ENCODE measurements at regions of chr11 and their contacts with region 1.

Region 1: DNA sequence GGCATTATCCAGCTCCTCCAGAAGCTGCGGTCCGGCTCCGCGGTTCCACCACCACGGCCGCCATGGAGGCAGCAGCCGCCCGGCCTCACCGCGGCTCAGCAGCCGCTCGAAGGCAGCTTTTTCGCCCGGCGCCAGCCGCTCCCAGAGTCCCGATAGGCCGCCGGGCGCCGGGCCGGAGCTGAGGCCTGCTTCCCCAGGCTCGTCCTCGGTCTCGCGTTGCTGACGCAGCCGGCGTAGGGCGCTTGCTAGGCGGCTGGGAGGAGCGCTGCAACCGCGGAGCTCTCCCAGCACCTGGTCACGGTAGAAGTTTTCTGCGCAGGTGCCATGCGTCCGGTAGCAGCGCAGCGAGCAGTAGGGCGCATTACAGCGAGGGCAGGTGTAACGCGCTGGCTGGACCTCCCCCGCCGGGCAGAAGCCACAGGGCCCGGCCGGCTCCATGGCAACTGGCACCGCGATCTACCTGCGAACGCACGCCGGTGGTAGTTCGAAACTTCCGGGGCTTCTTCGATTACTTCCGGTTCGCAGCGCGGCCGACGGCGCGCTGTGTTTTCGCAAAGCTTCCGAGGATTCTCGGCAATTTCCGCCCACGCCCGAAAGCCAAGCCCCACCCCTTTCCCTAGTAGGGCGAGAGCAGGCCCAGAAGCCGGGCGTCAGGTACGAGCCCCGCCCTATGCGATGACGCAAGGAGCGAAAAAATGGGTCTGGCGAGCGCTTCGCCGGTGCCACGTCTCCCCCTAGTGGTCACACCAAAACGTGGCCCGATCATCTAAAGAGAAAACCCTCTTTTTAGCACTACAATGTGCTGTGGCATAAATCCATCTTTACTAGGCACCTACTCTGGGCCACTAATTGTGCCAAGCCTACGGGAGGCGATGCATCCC is at the start of gene ZNHIT2:
- DNase-seq: peak; percentile 96 to 100 (median 100)
- ATAC-seq: peak; percentile 60 to 66
- H3K4me3 Mint-ChIP-seq: peak within 1 kb of the TSS; percentile 87 to 94 (median 90)
- H3K27ac Mint-ChIP-seq: peak within 1 kb of the TSS; percentile 82 to 99 (median 97)
- H3K4me1 Mint-ChIP-seq: peaks cover 24 to 71% (median 51%) of the 10 kb centered on the region in 4 donors
- H3K27me3 Mint-ChIP-seq: no peaks in the 10 kb centered on the region
- polyA plus RNA-seq, gene ZNHIT2: 24.3 to 33.1 (median 29.8) TPM

Region 2: DNA sequence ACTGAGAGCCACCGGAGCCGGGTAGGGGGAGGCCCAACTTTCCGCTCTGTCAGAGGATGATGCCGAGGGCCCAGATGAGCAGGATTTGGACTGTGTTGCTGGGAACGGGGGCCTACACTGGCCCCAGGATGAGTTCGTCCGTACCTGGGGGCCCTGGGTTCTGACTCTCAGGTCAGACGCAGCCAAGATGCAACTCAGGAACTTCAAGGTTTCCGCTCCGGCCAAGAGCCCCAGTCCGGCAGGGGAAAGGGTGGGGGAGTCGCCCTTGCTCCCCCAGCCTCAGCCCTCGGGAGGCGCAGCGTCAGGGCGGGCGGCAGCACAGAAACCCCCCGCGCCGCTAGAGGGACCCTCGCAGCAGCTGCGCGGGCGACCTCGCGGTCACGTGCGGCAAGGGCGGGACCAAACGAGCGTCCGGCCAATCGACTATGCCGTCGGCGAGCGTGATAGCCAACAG is 103.7 kb before region 1 on chr11:
- POLR2A ChIA-PET with region 1: interaction called, 23 read pairs
- DNase-seq: peak; percentile 83 to 93 (median 90)
- ATAC-seq: peak; percentile 82 to 89
- H3K4me3 Mint-ChIP-seq: peak overlapping the region; percentile 86 to 94 (median 89)
- H3K27ac Mint-ChIP-seq: peak overlapping the region; percentile 82 to 99 (median 94)
- H3K4me1 Mint-ChIP-seq: peaks cover 17 to 31% (median 29%) of the 10 kb centered on the region in 4 donors
- H3K27me3 Mint-ChIP-seq: no peaks in the 10 kb centered on the region

Region 3: DNA sequence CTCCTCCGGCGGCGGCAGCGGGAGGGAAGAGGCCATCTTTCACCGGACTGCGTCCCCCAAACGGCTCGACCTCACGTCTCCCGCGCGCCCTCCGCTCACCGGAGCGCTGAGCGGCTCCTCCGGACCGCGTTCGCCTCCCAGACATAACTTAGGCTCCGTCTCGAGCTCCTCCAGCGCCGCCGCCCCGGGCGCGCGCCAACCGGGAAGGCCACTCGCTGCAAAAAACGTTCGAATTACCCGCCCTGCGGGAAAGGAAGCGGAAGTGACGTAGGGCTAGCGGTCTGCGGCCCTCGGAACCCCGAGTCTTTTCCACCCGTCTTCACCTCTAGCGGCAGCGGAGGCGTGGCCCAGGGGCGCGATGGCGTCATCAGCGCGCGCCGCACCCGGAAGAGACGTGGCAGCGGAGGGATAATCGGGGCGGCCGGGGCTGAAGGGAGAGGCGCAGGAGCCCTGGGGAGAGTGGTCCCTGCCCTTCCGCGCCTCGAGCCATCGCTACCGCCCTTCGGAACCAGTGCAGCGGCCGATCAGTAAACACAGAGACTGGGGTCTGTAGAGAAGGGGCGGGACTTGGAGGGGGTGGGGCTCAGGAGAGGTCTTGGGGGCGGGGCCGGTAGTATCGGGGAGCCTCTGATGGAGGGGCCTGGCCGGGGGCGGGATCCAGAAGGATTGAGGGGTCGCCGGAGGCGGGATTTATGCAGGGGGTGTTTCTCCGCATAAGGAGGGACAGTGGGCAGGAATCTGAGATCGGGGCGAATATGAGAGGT is 33.4 kb before region 1 on chr11 and contains the starts of genes CDCA5 and ZFPL1:
- POLR2A ChIA-PET with region 1: interaction called, 18 read pairs
- DNase-seq: peak; percentile 92 to 98 (median 96)
- ATAC-seq: peak; percentile 88 to 92
- H3K4me3 Mint-ChIP-seq: peak within 1 kb of the TSS; percentile 86 to 99 (median 92)
- H3K27ac Mint-ChIP-seq: peak within 1 kb of the TSS; percentile 91 to 99 (median 98)
- H3K4me1 Mint-ChIP-seq: peaks cover 18 to 31% (median 27%) of the 10 kb centered on the region in 4 donors
- H3K27me3 Mint-ChIP-seq: peaks cover 0 to 2% (median 0%) of the 10 kb centered on the region in 5 donors
- polyA plus RNA-seq, gene CDCA5: 0.22 to 0.90 (median 0.35) TPM
- polyA plus RNA-seq, gene ZFPL1: 21.5 to 33.1 (median 24.9) TPM

Region 4: DNA sequence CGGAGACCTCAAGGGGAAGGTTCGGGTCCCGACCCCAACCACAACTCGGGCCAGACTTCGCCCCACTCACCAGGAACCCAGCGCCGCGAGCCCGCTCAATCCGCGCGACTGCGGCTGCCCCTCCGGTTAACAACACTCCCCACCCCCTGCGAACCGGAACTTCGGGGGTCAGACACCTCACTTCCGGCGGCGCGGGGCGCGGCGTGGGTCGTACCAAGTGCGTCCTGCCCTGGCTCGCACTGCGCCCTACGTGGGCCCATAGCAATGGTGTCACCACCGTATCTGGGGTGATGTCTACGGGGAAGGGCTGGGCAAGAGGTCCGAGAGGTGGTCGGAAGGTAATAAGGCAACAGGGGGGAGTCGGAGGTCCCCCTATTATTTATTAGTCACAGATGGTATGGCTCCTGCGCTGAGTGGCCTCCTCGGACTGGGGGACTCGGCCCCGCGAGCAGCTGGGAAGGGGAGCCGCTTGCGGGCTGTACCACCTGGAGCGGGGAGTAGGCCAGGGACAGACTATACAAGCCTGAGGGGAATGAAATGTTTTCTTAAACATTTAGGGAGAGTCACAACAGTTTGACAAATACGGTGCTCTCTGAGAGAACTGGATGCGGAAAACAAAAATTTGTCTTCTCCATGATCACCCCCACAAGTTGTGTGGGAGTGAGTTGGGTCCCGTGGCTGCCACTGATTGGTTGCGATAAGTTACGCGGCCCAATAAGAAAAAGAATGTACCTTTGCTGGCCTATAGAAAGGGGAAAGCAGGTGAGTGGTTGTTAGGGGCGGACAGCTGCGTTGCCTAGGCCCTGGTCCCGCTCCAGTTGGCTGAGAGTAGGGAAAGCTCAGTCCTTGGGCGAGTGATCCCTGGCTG is 17.2 kb after region 1 on chr11 and contains the start of gene SYVN1:
- POLR2A ChIA-PET with region 1: interaction called, 135 read pairs
- DNase-seq: peak; percentile 84 to 97 (median 90)
- ATAC-seq: peak; percentile 89 to 90
- H3K4me3 Mint-ChIP-seq: peak within 1 kb of the TSS; percentile 94 to 100 (median 98)
- H3K27ac Mint-ChIP-seq: peak within 1 kb of the TSS; percentile 99 to 100 (median 100)
- H3K4me1 Mint-ChIP-seq: peaks cover 26 to 57% (median 45%) of the 10 kb centered on the region in 4 donors
- H3K27me3 Mint-ChIP-seq: no peaks in the 10 kb centered on the region
- polyA plus RNA-seq, gene SYVN1: 7.9 to 10.6 (median 8.2) TPM

Region 5: GRCh38 chr11:65150509-65151271 is 33.2 kb after region 1 on chr11:
- POLR2A ChIA-PET with region 1: no interaction called
- DNase-seq: no peak
- ATAC-seq: no peak
- H3K4me3 Mint-ChIP-seq: peak overlapping the region in 1 of 10 donors; percentile 7
- H3K27ac Mint-ChIP-seq: peak overlapping the region in 2 of 10 donors; percentile 2 to 83
- H3K4me1 Mint-ChIP-seq: peaks cover 0 to 26% (median 2%) of the 10 kb centered on the region in 4 donors
- H3K27me3 Mint-ChIP-seq: peaks cover 0 to 11% (median 3%) of the 10 kb centered on the region in 5 donors

Region 6: GRCh38 chr11:65506770-65507505 is 389.5 kb after region 1 on chr11:
- POLR2A ChIA-PET with region 1: interaction called, 10 read pairs
- DNase-seq: peak in 5 of 10 donors; percentile 50 to 57 (median 56)
- ATAC-seq: peak; percentile 36 to 55
- H3K4me3 Mint-ChIP-seq: no peak overlapping the region
- H3K27ac Mint-ChIP-seq: peak overlapping the region in 9 of 10 donors; percentile 67 to 95 (median 89)
- H3K4me1 Mint-ChIP-seq: peaks cover 38 to 66% (median 58%) of the 10 kb centered on the region in 4 donors
- H3K27me3 Mint-ChIP-seq: no peaks in the 10 kb centered on the region